HepG2 (cell line): ENCODE measurements at regions of chr5 and their contacts with region 1.

Region 1: DNA sequence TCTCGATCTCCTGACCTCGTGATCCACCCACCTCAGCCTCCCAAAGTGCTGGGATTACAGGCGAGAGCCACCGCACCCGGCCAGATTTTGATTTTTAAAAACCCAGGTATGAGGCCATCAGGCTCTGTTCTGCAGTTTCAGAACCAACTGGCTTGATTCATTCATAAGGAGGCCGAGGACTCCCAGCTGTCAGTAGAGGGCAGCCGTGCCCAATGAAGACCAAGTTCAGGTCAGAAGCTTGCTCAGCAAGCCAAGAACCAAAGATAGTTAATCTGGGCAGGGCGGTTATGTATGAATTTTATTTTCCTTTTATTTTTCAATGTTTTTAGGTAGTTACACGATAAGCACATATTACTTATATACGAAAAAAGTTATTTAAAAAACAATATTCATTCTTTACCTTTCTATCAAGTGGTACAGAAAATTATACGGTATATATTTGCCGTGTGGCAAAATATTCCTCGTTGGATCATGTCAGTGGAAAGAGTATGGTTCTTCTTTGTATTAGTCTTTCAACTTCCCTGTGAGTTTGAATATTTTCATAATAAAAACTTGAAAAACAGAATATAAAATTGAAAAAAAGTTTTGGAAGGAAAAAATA is 18.0 kb downstream of the MGAT1 start:
- DNase-seq: peak; percentile 70
- ATAC-seq: peak; percentile 60
- H3K4me3 ChIP-seq: no peak overlapping the region
- H3K27ac ChIP-seq: no peak overlapping the region
- H3K4me1 ChIP-seq: peaks cover 12% of the 10 kb centered on the region
- H3K27me3 ChIP-seq: peaks cover 0 to 10% of the 10 kb centered on the region in 2 experiments; a peak in 1 of 5 replicates
- CTCF ChIP-seq: peak; percentile 87
- EP300 ChIP-seq: no peak
- POLR2A ChIP-seq: no peak
- RAD21 ChIP-seq: peak; percentile 68

Region 2: DNA sequence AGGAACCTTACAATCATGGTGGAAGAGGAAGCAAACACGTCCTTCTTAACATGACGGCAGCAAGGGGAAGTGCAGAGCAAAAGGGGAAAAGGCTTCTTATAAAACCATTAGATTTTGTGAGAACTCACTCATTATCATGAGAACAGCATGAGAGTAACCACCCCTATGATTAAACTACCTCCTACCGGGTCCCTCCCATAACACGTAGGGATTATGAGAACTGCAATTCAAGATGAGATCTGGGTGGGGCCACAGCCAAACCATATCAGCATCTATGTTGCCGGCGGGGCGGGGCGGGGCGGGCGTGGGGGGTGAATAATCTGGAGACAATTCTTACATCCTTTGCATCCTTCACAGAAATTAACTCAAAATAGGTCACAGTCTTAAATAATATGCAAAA is 372.6 kb before region 1 on chr5:
- CTCF ChIA-PET with region 1: no interaction called
- POLR2A ChIA-PET with region 1: no interaction called
- in situ Hi-C with region 1: no loop called
- intact Hi-C with region 1: no loop called
- DNase-seq: no peak
- ATAC-seq: no peak
- H3K4me3 ChIP-seq: no peak overlapping the region
- H3K27ac ChIP-seq: no peak overlapping the region
- H3K4me1 ChIP-seq: no peaks in the 10 kb centered on the region
- H3K27me3 ChIP-seq: no peaks in the 10 kb centered on the region; a peak in 1 of 5 replicates
- CTCF ChIP-seq: no peak
- EP300 ChIP-seq: no peak
- POLR2A ChIP-seq: no peak
- RAD21 ChIP-seq: no peak

Region 3: DNA sequence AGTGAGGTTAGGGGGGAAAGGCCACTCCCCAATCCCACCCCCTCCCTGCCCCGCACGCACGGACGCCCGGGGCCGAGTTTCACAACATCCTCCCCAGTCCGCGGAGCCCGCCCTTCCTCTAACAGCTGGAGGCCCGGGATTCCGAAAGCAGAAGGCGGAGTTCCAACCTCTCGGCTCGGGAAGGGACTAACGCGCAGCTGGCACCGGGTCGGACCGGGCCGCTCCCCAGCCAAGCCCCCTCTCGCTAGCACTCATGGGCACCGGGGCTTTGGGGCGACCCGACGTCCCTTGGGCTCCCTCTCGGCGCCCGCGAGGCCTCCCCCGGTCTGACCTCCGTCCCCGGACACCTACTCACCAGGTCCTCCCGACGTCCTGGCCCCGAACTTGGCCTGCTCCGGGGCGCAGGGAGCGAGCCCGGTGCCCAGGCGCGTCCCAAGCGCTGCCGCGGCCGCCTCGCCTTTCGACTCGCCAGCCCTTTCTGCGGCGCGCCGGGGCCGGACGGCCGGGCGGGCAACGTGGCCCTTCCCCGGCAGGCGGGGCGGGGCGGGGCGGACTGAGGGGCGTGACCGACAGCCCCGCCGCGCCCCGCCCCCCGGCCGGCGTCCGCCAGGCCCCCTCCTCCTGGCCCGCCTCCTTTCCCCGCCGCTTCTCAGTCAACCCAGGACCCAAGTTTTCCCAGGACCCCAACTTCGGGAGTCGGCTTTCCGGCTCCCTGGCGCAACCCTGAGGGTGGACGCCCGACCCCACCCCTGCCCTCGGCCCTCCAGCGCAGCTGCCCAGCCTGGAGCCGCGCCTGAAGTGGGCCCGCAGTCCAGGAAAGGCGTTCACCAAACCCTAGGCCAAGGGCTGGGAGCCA is 18.0 kb after region 1 on chr5 and contains the start of gene MGAT1:
- CTCF ChIA-PET with region 1: interaction called, 8 read pairs
- POLR2A ChIA-PET with region 1: no interaction called
- in situ Hi-C with region 1: no loop called
- intact Hi-C with region 1: loop called (anchors 2 kb)
- DNase-seq: peak; percentile 65
- ATAC-seq: peak; percentile 84
- H3K4me3 ChIP-seq: peak within 1 kb of the TSS; percentile 79 to 98 (median 90)
- H3K27ac ChIP-seq: peak within 1 kb of the TSS; percentile 78
- H3K4me1 ChIP-seq: peaks cover 80% of the 10 kb centered on the region
- H3K27me3 ChIP-seq: no peaks in the 10 kb centered on the region
- CTCF ChIP-seq: no peak
- EP300 ChIP-seq: no peak
- POLR2A ChIP-seq: peak in 1 of 2 experiments; percentile 76; a peak in 1 of 4 replicates
- RAD21 ChIP-seq: peak; percentile 52; the same call in 1 of the 2 replicates
- total RNA-seq, gene MGAT1: 26.7 and 50.1 TPM in 2 replicates

Region 4: GRCh38 chr5:181159286-181159829 is 374.8 kb after region 1 on chr5:
- CTCF ChIA-PET with region 1: no interaction called
- POLR2A ChIA-PET with region 1: no interaction called
- in situ Hi-C with region 1: loop called (anchors 10 kb)
- intact Hi-C with region 1: loop called (anchors 2 kb)
- DNase-seq: peak; percentile 67
- ATAC-seq: peak; percentile 93
- H3K4me3 ChIP-seq: peak overlapping the region in 1 of 3 experiments; percentile 62; a peak in 1 of 6 replicates
- H3K27ac ChIP-seq: no peak overlapping the region
- H3K4me1 ChIP-seq: peaks cover 32% of the 10 kb centered on the region
- H3K27me3 ChIP-seq: peaks cover 0 to 11% of the 10 kb centered on the region in 2 experiments; a peak in 2 of 5 replicates
- CTCF ChIP-seq: peak; percentile 90
- EP300 ChIP-seq: no peak
- POLR2A ChIP-seq: no peak
- RAD21 ChIP-seq: peak; percentile 67